ENCODE measurements at regions of chr7 and their contacts with region 1.

Region 1: DNA sequence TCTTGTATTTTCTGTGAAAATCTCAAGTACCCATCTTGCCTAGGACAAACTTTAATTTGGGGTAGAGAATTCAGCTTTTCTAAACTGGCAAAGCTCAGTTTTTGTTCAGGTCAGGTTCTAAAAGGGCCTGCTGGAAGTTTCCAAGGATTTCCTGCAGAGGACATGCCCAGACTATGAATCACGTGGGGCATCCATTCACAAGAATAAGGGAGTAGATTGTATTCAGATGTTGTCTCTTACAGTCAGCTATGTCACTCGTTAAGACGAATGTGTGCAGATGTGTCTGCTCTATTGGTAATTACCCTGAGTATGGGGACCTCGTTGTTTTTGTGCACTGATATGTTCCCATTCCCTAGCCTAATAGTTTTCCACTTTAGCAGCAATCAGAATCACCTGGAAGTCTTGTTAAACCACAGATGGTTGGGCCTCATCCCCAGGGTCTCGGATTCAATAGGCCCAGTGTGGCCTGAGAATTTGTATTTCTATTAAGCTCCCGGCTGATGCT is 81.0 kb upstream of the ITPRID1 start:
- DNase-seq: no peak
- H3K4me3 ChIP-seq: no peak overlapping the region
- H3K27ac ChIP-seq: no peak overlapping the region
- H3K4me1 ChIP-seq: no peaks in the 10 kb centered on the region
- H3K27me3 ChIP-seq: no peaks in the 10 kb centered on the region
- CTCF ChIP-seq: no peak
- POLR2A ChIP-seq: no peak

Region 2: GRCh38 chr7:31145339-31145738 is 287.5 kb before region 1 on chr7:
- intact Hi-C with region 1: no loop called
- DNase-seq: no peak
- H3K4me3 ChIP-seq: no peak overlapping the region
- H3K27ac ChIP-seq: no peak overlapping the region
- H3K4me1 ChIP-seq: no peaks in the 10 kb centered on the region
- H3K27me3 ChIP-seq: no peaks in the 10 kb centered on the region
- CTCF ChIP-seq: no peak
- POLR2A ChIP-seq: no peak

Region 3: GRCh38 chr7:31735991-31736982 is 303.4 kb after region 1 on chr7:
- intact Hi-C with region 1: loop called (anchors 10 kb)
- DNase-seq: peak; percentile 34 to 41
- H3K4me3 ChIP-seq: no peak overlapping the region
- H3K27ac ChIP-seq: no peak overlapping the region
- H3K4me1 ChIP-seq: no peaks in the 10 kb centered on the region
- H3K27me3 ChIP-seq: no peaks in the 10 kb centered on the region
- CTCF ChIP-seq: peak; percentile 62 to 78 (median 70)
- POLR2A ChIP-seq: no peak

Region 4: GRCh38 chr7:31776616-31777015 is 343.7 kb after region 1 on chr7:
- intact Hi-C with region 1: no loop called
- DNase-seq: no peak
- H3K4me3 ChIP-seq: no peak overlapping the region
- H3K27ac ChIP-seq: no peak overlapping the region
- H3K4me1 ChIP-seq: no peaks in the 10 kb centered on the region
- H3K27me3 ChIP-seq: no peaks in the 10 kb centered on the region
- CTCF ChIP-seq: no peak
- POLR2A ChIP-seq: no peak